AG04449 (cell line): ENCODE measurements at regions of chr2 and their contacts with region 1.

Region 1: GRCh38 chr2:110101280-110101844 is 14.3 kb downstream of the MALL start:
- DNase-seq: peak; percentile 99
- H3K4me3 ChIP-seq: peak overlapping the region; percentile 23; the same call in 1 of the 2 replicates
- CTCF ChIP-seq: no peak

Region 2: GRCh38 chr2:109376115-109376514 is 725.2 kb before region 1 on chr2:
- CTCF ChIA-PET with region 1: no interaction called
- POLR2A ChIA-PET with region 1: no interaction called
- DNase-seq: no peak
- H3K4me3 ChIP-seq: no peak overlapping the region
- CTCF ChIP-seq: no peak

Region 3: DNA sequence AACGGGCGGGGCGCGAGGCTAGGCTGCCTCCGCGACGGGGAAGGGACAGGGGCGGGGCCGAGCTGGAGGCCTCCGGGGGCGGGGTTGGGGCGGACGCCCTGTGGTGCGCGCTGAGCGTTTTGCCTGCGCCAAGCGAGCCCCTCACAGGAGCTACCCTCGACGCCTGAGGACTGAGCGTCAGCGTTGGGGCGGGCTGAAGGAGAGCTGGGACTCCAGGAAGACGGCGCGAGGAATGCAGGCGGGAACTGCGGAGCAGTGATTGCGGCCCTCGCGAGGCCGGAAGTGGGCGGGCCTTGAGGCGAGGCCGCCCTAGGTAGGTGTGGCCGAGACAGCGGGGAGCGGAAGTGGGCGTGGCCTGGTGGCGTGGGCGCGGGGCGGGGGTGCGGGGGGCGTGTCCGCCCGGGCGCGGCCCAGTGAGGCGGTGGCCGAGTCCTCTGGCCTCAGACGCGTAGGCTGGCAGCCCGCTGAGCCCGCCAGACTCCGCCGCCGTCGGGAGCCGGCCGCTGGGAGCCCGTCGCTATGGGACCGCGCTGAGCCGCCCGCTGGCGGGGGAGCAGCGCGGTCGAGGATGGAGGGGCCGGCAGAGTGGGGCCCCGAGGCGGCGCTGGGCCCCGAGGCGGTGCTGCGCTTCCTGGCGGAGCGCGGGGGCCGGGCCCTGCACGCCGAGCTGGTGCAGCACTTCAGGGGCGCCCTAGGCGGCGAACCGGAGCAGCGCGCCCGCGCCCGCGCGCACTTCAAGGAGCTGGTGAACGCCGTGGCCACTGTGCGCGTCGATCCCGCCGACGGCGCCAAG is 487.2 kb before region 1 on chr2 and contains the starts of genes SEPTIN10 and SOWAHC:
- CTCF ChIA-PET with region 1: no interaction called
- POLR2A ChIA-PET with region 1: no interaction called
- DNase-seq: peak; percentile 95
- H3K4me3 ChIP-seq: peak within 1 kb of the TSS; percentile 74
- CTCF ChIP-seq: no peak

Region 4: GRCh38 chr2:109702618-109702985 is 398.8 kb before region 1 on chr2:
- CTCF ChIA-PET with region 1: no interaction called
- POLR2A ChIA-PET with region 1: no interaction called
- DNase-seq: no peak
- H3K4me3 ChIP-seq: no peak overlapping the region
- CTCF ChIP-seq: no peak

Region 5: GRCh38 chr2:110116033-110116710 is 14.8 kb after region 1 on chr2:
- CTCF ChIA-PET with region 1: interaction called, 56 read pairs
- POLR2A ChIA-PET with region 1: interaction called, 4 read pairs
- DNase-seq: no peak
- H3K4me3 ChIP-seq: peak overlapping the region; percentile 58
- CTCF ChIP-seq: peak; percentile 87